ENCODE measurements at regions of chr17 and their contacts with region 1.

Region 1: DNA sequence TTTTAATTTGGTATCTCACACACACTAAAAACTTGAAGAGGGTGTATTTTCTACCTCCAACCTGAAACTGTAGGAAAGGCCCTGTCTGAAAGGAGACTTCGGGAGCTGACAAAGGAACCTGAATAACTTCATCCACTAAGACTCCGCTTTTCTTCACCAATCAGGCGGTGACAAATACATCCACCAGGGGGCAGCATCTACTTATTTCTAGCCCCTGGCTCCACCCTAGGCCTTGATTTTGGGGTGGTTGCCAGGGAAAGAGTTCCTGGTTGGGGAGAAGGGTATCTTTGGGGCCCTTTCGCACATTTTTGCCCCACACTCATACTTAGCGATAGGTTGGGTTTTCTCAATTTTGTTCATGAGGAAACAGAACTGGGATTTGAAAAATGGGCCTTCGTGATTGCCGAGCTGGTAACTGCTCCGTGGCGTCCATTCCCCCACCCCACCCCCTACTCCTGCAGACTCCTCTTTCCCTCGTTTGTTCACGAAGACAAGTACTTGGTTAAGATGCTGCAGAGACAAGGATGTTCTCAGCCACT is 4.8 kb upstream of the ARL4D start:
- DNase-seq: peak; percentile 91
- ATAC-seq: peak; percentile 51 to 72
- H3K4me3 ChIP-seq: no peak overlapping the region
- H3K27ac ChIP-seq: peak overlapping the region; percentile 53 to 69
- H3K4me1 ChIP-seq: peaks cover 13% of the 10 kb centered on the region
- CTCF ChIP-seq: peak; percentile 99
- EP300 ChIP-seq: no peak
- POLR2A ChIP-seq: no peak
- RAD21 ChIP-seq: peak; percentile 100

Region 2: GRCh38 chr17:43324205-43324893 is 69.7 kb before region 1 on chr17:
- CTCF ChIA-PET with region 1: no interaction called
- POLR2A ChIA-PET with region 1: no interaction called
- DNase-seq: peak in 1 of 2 experiments; percentile 58
- ATAC-seq: peak; percentile 30 to 83; a peak in 4 of 6 replicates
- H3K4me3 ChIP-seq: no peak overlapping the region
- H3K27ac ChIP-seq: no peak overlapping the region
- H3K4me1 ChIP-seq: no peaks in the 10 kb centered on the region
- CTCF ChIP-seq: no peak
- EP300 ChIP-seq: no peak
- POLR2A ChIP-seq: no peak
- RAD21 ChIP-seq: no peak

Region 3: GRCh38 chr17:43367737-43368242 is 26.2 kb before region 1 on chr17:
- CTCF ChIA-PET with region 1: interaction called, 53 read pairs
- POLR2A ChIA-PET with region 1: interaction called, 212 read pairs
- DNase-seq: peak; percentile 90 to 92
- ATAC-seq: peak; percentile 70 to 74
- H3K4me3 ChIP-seq: peak overlapping the region; percentile 44; the same call in 2 of the 3 replicates
- H3K27ac ChIP-seq: peak overlapping the region; percentile 94
- H3K4me1 ChIP-seq: peaks cover 22% of the 10 kb centered on the region
- CTCF ChIP-seq: no peak
- EP300 ChIP-seq: no peak
- POLR2A ChIP-seq: peak; percentile 97
- RAD21 ChIP-seq: no peak; a peak in 1 of 5 replicates

Region 4: GRCh38 chr17:43406676-43407645 is 12.9 kb after region 1 on chr17:
- CTCF ChIA-PET with region 1: interaction called, 386 read pairs
- POLR2A ChIA-PET with region 1: interaction called, 27 read pairs
- DNase-seq: peak in 1 of 2 experiments; percentile 72
- ATAC-seq: peak; percentile 67 to 81
- H3K4me3 ChIP-seq: no peak overlapping the region
- H3K27ac ChIP-seq: peak overlapping the region; percentile 79 to 86
- H3K4me1 ChIP-seq: peaks cover 55% of the 10 kb centered on the region
- CTCF ChIP-seq: no peak
- EP300 ChIP-seq: no peak
- POLR2A ChIP-seq: no peak
- RAD21 ChIP-seq: no peak

Region 5: GRCh38 chr17:43428524-43428923 is 34.5 kb after region 1 on chr17:
- CTCF ChIA-PET with region 1: interaction called, 33 read pairs
- POLR2A ChIA-PET with region 1: interaction called, 8 read pairs
- DNase-seq: no peak
- ATAC-seq: no peak
- H3K4me3 ChIP-seq: no peak overlapping the region
- H3K27ac ChIP-seq: no peak overlapping the region
- H3K4me1 ChIP-seq: peaks cover 38% of the 10 kb centered on the region
- CTCF ChIP-seq: peak; percentile 36; the same call in 2 of the 3 replicates
- EP300 ChIP-seq: no peak
- POLR2A ChIP-seq: no peak
- RAD21 ChIP-seq: peak in 1 of 2 experiments; percentile 33; a peak in 2 of 5 replicates

Region 6: DNA sequence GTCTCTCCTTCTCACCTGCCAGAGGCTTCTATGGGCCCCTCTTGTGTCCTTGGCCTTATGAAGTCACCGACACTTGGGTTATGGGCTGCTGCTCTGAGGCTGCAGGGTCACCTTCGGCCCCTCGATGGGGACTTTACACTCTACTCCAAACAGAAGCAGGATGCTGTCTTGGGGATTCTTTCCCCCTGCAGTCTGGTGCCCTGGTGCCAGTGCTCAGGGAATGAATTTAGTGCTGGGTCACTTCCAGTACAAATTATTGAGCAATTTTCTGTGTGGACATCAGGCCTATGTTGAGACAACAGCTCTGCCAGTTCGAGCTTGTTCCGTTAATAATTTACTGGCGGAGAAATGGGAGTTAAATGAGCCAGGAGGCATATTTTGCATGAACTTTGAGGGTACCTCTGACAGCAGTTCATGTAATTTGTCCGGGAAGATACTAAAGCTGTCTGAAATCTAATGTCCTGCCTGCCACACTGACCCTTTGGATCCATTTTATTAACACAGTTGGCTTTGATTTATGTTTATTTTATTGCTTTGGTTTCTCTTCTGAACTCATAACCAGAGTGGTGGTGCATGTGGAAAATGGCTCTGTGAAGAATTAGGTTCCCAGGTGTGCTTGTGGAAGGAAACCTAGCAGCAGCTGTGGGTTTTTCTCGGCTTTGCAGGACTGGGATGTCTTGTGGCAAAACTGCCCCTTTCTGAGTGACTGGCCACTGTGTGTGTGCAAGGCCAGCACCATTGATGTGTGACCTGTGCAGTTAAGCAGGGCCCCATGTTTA is 55.6 kb after region 1 on chr17:
- CTCF ChIA-PET with region 1: interaction called, 2,036 read pairs
- POLR2A ChIA-PET with region 1: interaction called, 17 read pairs
- DNase-seq: peak; percentile 67 to 80
- ATAC-seq: peak; percentile 88 to 91
- H3K4me3 ChIP-seq: no peak overlapping the region
- H3K27ac ChIP-seq: peak overlapping the region; percentile 70 to 87
- H3K4me1 ChIP-seq: peaks cover 26% of the 10 kb centered on the region
- CTCF ChIP-seq: no peak
- EP300 ChIP-seq: no peak; a peak in 1 of 5 replicates
- POLR2A ChIP-seq: no peak
- RAD21 ChIP-seq: peak in 1 of 2 experiments; percentile 26; a peak in 2 of 5 replicates

Region 7: GRCh38 chr17:43517615-43518386 is 123.8 kb after region 1 on chr17:
- CTCF ChIA-PET with region 1: interaction called, 13 read pairs
- POLR2A ChIA-PET with region 1: no interaction called
- DNase-seq: no peak
- ATAC-seq: no peak
- H3K4me3 ChIP-seq: no peak overlapping the region
- H3K27ac ChIP-seq: no peak overlapping the region
- H3K4me1 ChIP-seq: no peaks in the 10 kb centered on the region
- CTCF ChIP-seq: no peak
- EP300 ChIP-seq: no peak
- POLR2A ChIP-seq: no peak
- RAD21 ChIP-seq: no peak